ENCODE measurements at regions of chr3 and their contacts with region 1.

Region 1: DNA sequence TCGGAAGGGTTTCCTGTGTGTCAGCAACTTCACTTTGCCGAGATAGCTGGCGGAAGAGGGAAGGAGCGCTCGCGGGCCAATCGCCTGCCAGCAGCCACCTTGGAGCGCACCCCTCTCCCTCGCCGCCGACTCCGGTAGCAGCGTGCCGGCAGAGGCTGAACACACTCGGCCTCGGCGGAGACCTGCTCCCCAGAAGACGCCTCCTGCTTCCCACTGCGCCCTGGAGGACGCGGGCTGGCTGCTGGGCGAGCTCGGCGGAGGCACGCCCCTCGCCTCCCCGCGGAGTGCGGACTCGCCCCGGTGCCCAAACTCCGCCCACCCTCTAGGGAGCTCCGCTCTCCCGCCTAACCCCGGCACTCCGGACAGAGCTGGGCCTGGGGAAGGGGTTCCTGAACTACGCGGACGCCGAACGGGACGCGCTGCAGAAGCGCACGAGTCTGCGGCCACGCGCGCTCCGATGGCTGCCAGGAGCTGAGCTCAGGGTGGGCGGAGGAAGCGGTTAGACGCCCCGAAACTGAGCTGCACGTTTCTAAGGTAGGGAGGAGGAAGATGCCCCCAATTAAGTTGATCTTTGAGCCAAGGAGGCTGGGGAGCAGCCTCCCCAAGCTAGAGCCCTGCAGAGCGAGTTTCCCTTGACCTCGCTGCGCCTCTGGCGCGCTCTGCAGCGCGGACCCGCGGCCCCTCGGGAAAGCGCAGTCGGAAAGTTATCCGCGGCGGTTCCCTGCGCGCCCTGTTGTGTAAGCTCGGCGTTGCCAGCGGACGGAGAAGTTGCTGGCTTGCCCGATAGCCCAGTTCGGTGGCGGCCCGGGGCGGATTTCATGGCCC is at the start of gene P2RY1:
- DNase-seq: peak; percentile 61 to 73
- ATAC-seq: peak; percentile 89 to 94 (median 90)
- H3K4me3 ChIP-seq: peak within 1 kb of the TSS; percentile 59 to 87 (median 74)
- H3K27ac ChIP-seq: peak within 1 kb of the TSS; percentile 50 to 87 (median 80)
- H3K4me1 ChIP-seq: peaks cover 0 to 43% (median 21%) of the 10 kb centered on the region in 9 donors
- H3K27me3 ChIP-seq: peaks cover 0 to 5% (median 0%) of the 10 kb centered on the region in 7 donors
- CTCF ChIP-seq: peak in 7 of 9 donors; percentile 21 to 56 (median 51)
- total RNA-seq, gene P2RY1: 3.2 to 7.5 (median 4.8) TPM

Region 2: GRCh38 chr3:152444029-152444641 is 390.9 kb before region 1 on chr3:
- intact Hi-C with region 1: no loop called
- DNase-seq: no peak
- ATAC-seq: peak in 7 of 8 donors; percentile 53 to 84 (median 70)
- H3K4me3 ChIP-seq: no peak overlapping the region
- H3K27ac ChIP-seq: peak overlapping the region in 4 of 10 donors; percentile 2 to 34 (median 22)
- H3K4me1 ChIP-seq: peaks cover 0 to 77% (median 44%) of the 10 kb centered on the region in 9 donors
- H3K27me3 ChIP-seq: no peaks in the 10 kb centered on the region
- CTCF ChIP-seq: peak; percentile 48 to 85 (median 66)

Region 3: DNA sequence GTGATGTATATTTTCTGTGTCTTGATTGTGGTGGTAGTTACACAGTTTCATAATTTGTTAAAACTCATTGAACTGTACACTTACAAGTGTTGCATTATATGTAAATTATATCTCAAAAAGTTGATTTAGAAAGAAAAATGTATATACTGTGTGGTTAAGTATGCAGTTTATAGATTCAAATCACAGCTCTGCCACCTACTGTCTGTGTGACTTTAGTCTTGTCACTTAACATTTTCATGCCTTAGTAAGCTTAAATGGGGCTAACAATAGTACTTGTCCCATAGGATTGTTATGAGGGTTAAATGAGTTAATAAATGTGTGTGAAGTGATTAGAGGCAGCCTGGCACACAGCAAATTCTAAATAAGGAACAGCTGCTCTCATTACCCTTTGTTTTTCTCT is 121.0 kb before region 1 on chr3:
- intact Hi-C with region 1: no loop called
- DNase-seq: no peak
- ATAC-seq: no peak
- H3K4me3 ChIP-seq: no peak overlapping the region
- H3K27ac ChIP-seq: no peak overlapping the region
- H3K4me1 ChIP-seq: peaks cover 0 to 4% (median 0%) of the 10 kb centered on the region in 9 donors
- H3K27me3 ChIP-seq: no peaks in the 10 kb centered on the region
- CTCF ChIP-seq: peak in 1 of 9 donors; percentile 12

Region 4: DNA sequence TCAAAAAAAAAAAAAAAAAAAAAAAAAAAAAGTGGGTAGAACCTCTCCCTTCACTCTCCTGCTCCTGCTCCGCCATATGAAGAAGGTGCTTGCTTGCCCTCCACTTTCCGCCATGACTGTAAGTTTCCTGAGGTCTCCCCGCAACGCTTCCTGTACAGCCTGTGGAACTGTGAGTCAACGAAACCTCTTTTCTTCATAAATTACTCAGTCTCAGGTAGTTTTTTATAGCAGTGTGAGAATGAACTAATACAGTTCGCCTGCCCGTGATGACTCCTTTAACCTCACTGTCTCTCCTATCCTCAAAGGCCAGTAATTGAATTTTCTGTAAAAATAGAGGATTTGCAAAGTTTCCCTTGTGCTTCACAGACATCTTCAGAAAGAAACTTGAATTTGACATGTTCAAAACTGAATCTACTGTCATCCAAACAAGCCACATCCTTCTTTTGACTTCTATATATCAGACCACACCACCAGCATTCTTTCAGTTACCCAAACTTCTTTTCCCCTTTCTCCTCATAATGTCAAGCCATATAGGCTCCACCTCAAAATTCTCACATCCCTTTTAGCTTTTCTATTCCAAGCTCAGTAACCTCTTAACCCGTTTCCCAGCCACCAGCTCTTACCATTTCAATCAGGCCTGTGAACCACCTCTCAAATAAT is 44.3 kb after region 1 on chr3:
- intact Hi-C with region 1: no loop called
- DNase-seq: no peak
- ATAC-seq: no peak
- H3K4me3 ChIP-seq: no peak overlapping the region
- H3K27ac ChIP-seq: no peak overlapping the region
- H3K4me1 ChIP-seq: no peaks in the 10 kb centered on the region
- H3K27me3 ChIP-seq: no peaks in the 10 kb centered on the region
- CTCF ChIP-seq: no peak

Region 5: GRCh38 chr3:152909180-152909883 is 74.3 kb after region 1 on chr3:
- intact Hi-C with region 1: loop called in 1 of 10 experiments (anchors 2 kb)
- DNase-seq: peak in 1 of 2 donors; percentile 57
- ATAC-seq: peak; percentile 78 to 99 (median 94)
- H3K4me3 ChIP-seq: no peak overlapping the region
- H3K27ac ChIP-seq: peak overlapping the region in 5 of 10 donors; percentile 16 to 40 (median 20)
- H3K4me1 ChIP-seq: peaks cover 0 to 5% (median 0%) of the 10 kb centered on the region in 9 donors
- H3K27me3 ChIP-seq: no peaks in the 10 kb centered on the region
- CTCF ChIP-seq: no peak

Measured in heart right ventricle (tissue), 16 donors.